A673 (cell line): ENCODE measurements at regions of chr5 and their contacts with region 1.

Region 1: DNA sequence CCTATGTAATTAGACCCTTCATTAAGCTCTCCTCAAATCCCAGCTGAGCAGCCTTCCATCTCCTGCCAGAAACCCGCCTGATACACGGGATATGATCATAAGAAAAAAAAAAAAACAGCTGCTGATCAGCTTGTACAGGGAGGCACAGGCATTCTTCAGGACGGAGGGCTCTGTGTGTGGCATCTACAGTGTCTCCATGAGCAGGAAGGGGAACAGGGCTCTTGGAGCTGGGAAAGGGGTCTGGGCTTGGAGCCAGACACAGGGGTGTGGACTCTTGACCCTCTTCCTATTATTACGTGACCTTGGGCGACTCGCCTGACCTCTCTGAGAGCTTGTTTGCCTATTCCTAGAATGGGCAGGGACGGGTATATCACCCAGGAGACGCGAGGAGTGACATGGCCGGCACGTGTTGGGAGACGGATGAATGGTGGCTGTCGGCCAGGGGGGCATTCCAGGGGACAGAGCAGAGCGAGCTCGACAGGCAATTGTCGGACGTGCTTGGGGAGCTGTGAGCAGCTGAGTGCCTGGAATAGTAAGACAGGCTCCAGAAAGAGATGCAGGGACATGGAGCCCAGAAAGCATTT is 29.5 kb upstream of the UNC5A start:
- DNase-seq: no peak
- H3K4me3 ChIP-seq: no peak overlapping the region
- H3K27ac ChIP-seq: no peak overlapping the region
- H3K4me1 ChIP-seq: no peaks in the 10 kb centered on the region
- H3K27me3 ChIP-seq: no peaks in the 10 kb centered on the region
- CTCF ChIP-seq: no peak

Region 2: DNA sequence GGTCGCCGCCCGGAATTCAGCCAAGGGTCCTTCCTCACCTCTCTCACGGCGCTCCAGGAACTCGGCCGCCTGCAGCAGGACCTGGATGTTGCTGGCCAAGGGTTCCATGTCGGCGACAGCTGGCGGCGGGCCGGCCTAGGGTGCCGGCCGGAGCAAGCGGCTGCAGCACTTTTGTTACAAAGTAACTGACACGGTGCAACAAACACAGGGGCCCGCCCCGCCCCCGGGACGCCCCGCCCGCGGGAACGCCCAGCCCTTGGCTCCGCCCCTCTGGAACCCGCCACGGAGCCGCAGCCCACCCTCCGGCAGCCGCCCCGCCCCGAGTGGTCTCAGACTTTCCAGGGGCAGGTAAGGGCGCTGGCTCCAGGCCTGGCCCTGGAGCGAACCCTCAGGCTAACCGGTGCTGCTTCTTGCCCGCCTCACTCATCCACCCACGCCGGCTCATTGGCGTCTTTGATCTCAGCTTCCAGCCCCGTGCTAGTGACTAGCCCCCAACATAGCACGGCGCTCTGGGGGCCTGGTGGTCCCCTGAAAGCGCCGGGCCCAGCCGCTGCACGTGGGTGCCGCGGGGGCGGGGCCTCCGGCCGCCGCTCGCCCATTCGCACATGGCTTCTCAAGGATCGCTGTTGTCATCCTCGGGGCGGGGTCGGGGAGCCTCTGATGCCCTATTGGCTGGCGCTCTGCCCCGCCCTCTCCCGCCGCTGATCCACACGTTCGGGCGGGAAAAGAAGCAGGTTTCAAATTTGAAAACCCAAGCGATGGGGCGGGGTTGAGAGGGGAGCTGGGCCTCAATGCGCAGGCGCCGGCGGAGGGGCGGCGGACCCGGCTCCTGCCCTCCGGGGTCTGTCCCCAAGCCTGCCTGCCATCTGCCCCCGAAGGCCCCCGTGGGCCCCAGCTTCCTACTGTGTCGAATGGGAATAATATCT is 531.1 kb after region 1 on chr5 and contains the start of gene MXD3:
- CTCF ChIA-PET with region 1: interaction called, 18 read pairs
- POLR2A ChIA-PET with region 1: no interaction called
- intact Hi-C with region 1: no loop called
- DNase-seq: peak; percentile 98
- H3K4me3 ChIP-seq: peak within 1 kb of the TSS; percentile 80
- H3K27ac ChIP-seq: peak within 1 kb of the TSS; percentile 97
- H3K4me1 ChIP-seq: peaks cover 20% of the 10 kb centered on the region
- H3K27me3 ChIP-seq: no peaks in the 10 kb centered on the region
- CTCF ChIP-seq: no peak
- total RNA-seq, gene MXD3: 15.1 and 19.4 TPM in 2 replicates

Region 3: GRCh38 chr5:178496642-178497041 is 1715.8 kb after region 1 on chr5:
- CTCF ChIA-PET with region 1: no interaction called
- POLR2A ChIA-PET with region 1: no interaction called
- intact Hi-C with region 1: no loop called
- DNase-seq: peak; percentile 33
- H3K4me3 ChIP-seq: no peak overlapping the region
- H3K27ac ChIP-seq: no peak overlapping the region
- H3K4me1 ChIP-seq: no peaks in the 10 kb centered on the region
- H3K27me3 ChIP-seq: no peaks in the 10 kb centered on the region
- CTCF ChIP-seq: no peak